Heart left ventricle (tissue), 16 donors: ENCODE measurements at regions of chr13 and their contacts with region 1.

Region 1: GRCh38 chr13:43895708-43896335 is 16.1 kb downstream of the LACC1 start:
- DNase-seq: no peak
- ATAC-seq: no peak
- H3K4me3 ChIP-seq: no peak overlapping the region
- H3K27ac ChIP-seq: no peak overlapping the region
- H3K4me1 ChIP-seq: no peaks in the 10 kb centered on the region
- H3K27me3 ChIP-seq: no peaks in the 10 kb centered on the region
- CTCF ChIP-seq: no peak
- POLR2A ChIP-seq: no peak

Region 2: DNA sequence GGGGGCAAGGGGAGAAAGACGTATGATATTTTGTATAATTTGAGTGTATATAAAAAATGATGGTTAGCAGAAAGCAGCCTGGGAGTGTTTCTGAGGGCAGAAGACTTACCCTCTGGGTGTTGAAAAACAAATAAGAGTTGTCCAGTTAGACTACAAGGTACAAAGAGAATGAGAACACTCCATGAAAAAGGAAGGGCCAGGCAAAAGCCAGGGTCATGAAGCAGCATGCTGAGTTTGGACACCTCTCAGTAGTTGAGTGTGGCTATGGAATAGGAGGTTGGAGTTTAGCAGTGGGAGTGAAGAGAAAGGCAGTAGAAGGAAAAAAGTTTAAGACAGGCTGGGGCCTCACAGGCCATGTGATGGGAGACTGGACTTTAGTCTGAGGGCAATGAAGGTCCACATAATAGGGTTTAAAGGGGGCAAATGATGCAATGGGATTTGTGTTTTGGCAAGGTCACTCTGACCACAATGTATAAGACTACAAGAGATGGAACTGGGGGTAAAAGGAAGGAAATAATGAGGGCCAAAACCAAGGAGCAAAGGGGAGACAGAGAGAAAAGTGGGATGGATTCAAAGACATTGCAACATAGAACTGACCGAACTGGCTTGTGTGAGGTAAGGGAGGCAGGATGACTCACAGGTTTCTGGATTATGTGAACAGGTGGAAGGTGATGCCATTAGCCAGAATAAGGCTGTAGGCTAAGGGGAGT is 554.3 kb after region 1 on chr13:
- intact Hi-C with region 1: loop called in 2 of 10 experiments (anchors 5 kb)
- DNase-seq: no peak
- ATAC-seq: no peak
- H3K4me3 ChIP-seq: no peak overlapping the region
- H3K27ac ChIP-seq: no peak overlapping the region
- H3K4me1 ChIP-seq: peaks cover 0 to 7% (median 0%) of the 10 kb centered on the region in 12 donors
- H3K27me3 ChIP-seq: no peaks in the 10 kb centered on the region
- CTCF ChIP-seq: no peak
- POLR2A ChIP-seq: no peak